ENCODE measurements at regions of chr13 and their contacts with region 1.

Region 1: GRCh38 chr13:27424246-27425157 is at the start of gene GTF3A:
- DNase-seq: peak; percentile 96

Region 2: DNA sequence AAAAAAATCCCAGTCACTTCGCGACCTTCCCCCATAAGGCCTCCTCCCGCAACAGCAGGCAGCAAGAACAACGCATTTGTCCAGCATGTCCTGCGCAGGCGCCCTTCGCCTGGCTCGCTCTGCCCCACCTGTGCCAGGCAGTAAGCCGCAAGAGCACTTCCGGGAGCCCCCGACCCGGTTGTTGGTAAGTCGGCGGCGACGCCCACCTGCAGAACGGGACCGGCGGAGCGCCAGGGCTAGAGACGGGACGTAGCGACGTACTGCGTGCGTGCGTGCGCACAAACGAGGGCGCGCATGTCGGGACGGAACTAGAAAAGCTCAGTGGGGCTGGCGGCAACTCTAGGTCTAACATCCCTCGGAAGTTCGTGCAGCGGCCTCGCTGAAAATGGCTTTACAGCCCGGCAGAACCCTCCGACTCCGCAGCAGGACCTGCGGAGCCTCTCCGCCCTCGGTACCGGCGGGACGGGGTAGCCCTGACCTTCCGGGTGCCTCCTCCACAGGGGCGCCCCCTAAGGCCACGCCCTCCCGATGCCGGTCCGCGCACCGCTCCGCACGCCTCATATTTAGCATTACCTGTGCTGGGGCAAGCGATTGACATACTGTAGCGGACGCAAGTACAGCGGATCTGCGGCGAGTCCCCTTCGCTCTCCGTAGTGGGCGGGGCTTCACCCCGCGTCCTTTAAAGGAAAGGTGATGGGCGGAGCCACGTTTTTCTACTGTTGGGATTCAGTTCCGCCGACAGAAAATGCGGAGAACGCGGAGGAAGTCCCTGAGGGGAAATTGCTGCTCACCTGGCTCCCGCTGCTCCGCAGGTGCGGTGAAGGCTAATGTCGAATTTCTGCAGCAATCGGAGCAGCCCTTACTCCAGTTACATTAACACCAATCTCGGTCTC is 25.7 kb after region 1 on chr13 and contains the start of gene MTIF3:
- CTCF ChIA-PET with region 1: interaction called, 5 read pairs
- POLR2A ChIA-PET with region 1: interaction called, 15 read pairs
- DNase-seq: peak; percentile 86

Region 3: DNA sequence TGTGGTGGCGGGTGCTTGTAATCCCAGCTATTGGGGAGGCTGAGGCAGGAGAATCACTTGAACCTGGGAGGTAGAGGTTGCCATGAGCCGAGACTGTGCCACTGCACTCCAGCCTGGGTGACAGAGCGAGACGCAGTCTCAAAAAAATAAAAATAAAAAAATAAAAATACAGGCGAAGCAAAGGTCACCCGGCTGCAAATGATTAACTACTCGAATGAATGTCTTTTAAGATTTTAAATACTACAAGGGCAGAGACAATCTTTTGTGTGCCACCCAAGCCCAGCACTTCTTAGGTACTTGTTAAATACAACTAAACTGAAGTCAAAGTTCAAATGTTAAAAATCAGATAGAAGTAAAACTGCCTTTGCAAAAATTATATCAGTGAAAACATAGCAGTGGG is 189.1 kb after region 1 on chr13:
- CTCF ChIA-PET with region 1: no interaction called
- POLR2A ChIA-PET with region 1: no interaction called
- DNase-seq: no peak

Measured in HEK293T (cell line).